Activated CD4-positive, alpha-beta T cell treated with anti-CD3 and anti-CD28 coated beads, Interleukin-2, amount 10 ng/mL, durations not matched to agents 24 days and 14 days (primary cell): ENCODE measurements at regions of chr3 and their contacts with region 1.

Region 1: DNA sequence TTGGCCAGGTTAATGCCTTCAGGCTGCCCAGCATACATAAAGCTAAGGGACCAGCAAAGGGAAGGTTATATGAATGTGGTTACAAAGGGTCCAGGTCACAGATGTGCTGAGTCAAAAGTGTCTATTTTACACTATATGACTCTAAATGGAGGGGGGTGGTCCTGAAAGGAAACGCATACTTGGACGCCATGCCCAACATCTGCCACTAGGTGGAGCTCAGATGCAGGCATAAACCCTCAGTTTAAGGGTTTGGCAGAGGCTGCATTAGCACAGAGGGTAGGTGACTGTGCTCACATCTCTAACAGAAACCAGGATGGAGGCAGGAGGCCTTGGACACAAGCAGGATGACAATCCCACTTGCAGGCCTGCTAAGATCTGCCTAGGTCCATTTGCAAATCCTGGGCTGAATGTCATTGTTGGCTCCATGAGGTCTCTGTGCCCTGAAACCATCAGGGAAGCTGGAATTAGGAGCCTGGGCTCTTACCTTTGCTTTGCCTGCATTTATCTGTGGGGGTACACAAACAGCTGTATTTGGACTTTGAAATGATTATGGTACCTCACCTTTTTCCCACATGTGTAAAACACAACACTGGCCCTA is 55.8 kb downstream of the ZNF621 start:
- DNase-seq: peak; percentile 88
- H3K4me3 Mint-ChIP-seq: no peak overlapping the region
- H3K27ac Mint-ChIP-seq: no peak overlapping the region
- H3K4me1 Mint-ChIP-seq: no peaks in the 10 kb centered on the region
- H3K27me3 Mint-ChIP-seq: peaks cover 7% of the 10 kb centered on the region

Region 2: GRCh38 chr3:41065340-41065739 is 484.7 kb after region 1 on chr3:
- intact Hi-C with region 1: no loop called
- DNase-seq: no peak
- H3K4me3 Mint-ChIP-seq: no peak overlapping the region
- H3K27ac Mint-ChIP-seq: no peak overlapping the region
- H3K4me1 Mint-ChIP-seq: no peaks in the 10 kb centered on the region
- H3K27me3 Mint-ChIP-seq: peaks cover 6% of the 10 kb centered on the region

Region 3: DNA sequence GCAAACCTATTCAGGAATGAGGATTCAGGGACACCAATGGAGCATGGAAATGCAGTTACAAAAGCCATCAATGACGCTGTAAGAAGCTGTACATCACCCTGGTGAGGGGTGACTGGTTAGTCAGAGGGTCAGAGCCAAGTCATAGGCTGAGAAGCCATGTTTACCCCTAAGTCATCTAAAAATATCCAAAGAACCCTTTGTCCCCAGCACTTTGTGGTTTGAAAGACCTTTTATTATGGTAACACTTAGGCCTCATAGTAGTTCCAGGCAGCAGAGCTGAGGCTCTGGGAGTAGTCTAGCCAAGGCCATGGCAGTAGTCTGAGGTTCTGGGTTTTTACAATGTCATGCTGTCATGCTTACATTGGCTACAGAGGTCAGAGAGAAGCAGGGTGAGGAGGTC is 749.9 kb after region 1 on chr3:
- intact Hi-C with region 1: loop called (anchors 10 kb)
- DNase-seq: no peak
- H3K4me3 Mint-ChIP-seq: no peak overlapping the region
- H3K27ac Mint-ChIP-seq: no peak overlapping the region
- H3K4me1 Mint-ChIP-seq: no peaks in the 10 kb centered on the region
- H3K27me3 Mint-ChIP-seq: peaks cover 1% of the 10 kb centered on the region

Region 4: GRCh38 chr3:41881233-41881821 is 1300.7 kb after region 1 on chr3:
- intact Hi-C with region 1: loop called (anchors 1 kb)
- DNase-seq: peak; percentile 76
- H3K4me3 Mint-ChIP-seq: no peak overlapping the region
- H3K27ac Mint-ChIP-seq: no peak overlapping the region
- H3K4me1 Mint-ChIP-seq: no peaks in the 10 kb centered on the region
- H3K27me3 Mint-ChIP-seq: no peaks in the 10 kb centered on the region

Region 5: GRCh38 chr3:42101048-42101447 is 1520.5 kb after region 1 on chr3:
- intact Hi-C with region 1: loop called (anchors 1 kb)
- DNase-seq: no peak
- H3K4me3 Mint-ChIP-seq: no peak overlapping the region
- H3K27ac Mint-ChIP-seq: no peak overlapping the region
- H3K4me1 Mint-ChIP-seq: peaks cover 30% of the 10 kb centered on the region
- H3K27me3 Mint-ChIP-seq: no peaks in the 10 kb centered on the region

Region 6: DNA sequence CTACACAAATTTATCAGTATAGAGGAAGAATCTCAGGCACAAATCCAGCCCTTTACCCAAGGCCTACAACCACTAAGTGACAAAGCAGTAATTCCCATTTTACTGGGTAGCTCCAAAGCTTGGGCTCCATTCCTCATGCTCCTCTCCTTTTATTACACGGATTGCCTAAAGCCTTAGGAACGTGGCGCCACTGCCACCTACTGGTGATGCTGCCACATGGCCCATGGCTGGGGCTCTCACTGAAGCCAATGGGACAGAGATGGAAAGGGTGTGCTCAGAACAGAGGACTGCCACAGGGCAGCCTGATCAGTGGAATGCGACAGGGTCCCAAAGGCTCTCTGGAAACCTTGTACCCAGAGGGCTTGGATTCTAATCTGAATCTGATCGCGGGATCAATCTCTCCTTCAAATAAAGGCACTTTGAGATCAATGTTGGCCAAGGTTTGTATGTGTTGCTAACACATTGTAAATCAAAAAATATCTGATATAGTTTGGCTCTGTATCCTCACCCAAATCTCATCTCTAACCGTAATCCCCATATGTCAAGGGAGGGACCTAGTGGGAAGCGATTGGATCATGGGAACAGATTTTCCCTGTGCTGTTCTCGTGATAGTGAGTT is 1863.3 kb after region 1 on chr3:
- intact Hi-C with region 1: loop called (anchors 10 kb)
- DNase-seq: peak; percentile 93
- H3K4me3 Mint-ChIP-seq: no peak overlapping the region
- H3K27ac Mint-ChIP-seq: no peak overlapping the region
- H3K4me1 Mint-ChIP-seq: no peaks in the 10 kb centered on the region
- H3K27me3 Mint-ChIP-seq: peaks cover 7% of the 10 kb centered on the region